Natural killer cell (primary cell): ENCODE measurements at regions of chr14 and their contacts with region 1.

Region 1: DNA sequence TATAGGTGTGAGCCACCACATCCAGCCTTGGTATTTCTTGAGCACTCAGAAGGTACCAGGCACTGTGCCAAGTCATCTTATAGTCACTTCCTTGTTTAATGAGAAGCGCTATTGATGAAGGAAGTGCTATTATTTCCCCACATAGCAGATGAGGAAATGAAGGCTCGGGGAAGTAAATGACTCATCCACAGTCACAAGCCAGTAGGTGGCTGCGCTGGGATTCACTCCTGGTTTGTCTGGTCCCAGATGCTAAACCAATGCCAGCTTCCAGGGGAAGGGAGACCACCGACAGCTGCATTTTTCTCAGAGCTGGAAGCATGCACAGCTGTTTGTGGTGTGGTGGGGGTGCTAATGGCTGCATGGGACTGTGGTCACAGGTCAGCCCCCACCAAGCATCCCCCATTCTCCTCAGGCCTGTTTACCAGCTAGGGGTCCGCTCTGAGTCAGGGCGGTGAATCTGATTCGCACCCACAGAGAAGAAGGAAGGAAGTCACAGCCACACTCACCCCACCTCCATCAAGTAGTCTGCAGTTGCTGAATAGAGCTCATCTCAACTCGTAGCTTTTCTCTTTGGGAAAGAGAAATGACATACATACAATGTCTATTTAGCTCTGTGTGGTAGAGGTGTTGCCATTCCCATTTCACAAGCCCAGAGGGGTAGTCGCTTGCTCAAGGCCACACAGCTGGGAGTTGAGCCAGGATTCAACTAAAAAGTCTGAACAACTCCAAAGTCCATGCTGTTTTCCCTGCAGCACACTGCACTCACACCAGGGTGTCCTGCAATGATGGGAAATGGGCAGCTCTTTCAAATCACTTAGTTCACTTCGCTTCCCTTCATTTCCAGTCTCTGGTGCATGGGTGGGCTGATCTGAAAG is 6.3 kb upstream of the LTBP2 start:
- DNase-seq: peak; percentile 86 to 92
- ATAC-seq: peak; percentile 74 to 91 (median 89)
- H3K4me3 ChIP-seq: no peak overlapping the region
- H3K4me3 Mint-ChIP-seq: peak overlapping the region; percentile 83
- H3K27ac ChIP-seq: peak overlapping the region; percentile 84
- H3K27ac Mint-ChIP-seq: peak overlapping the region; percentile 91 to 97
- H3K4me1 ChIP-seq: peaks cover 82% of the 10 kb centered on the region
- H3K4me1 Mint-ChIP-seq: peaks cover 82 to 92% of the 10 kb centered on the region in 2 donors
- H3K27me3 ChIP-seq: no peaks in the 10 kb centered on the region
- H3K27me3 Mint-ChIP-seq: peaks cover 0 to 2% of the 10 kb centered on the region in 2 donors
- CTCF ChIP-seq: no peak

Region 2: DNA sequence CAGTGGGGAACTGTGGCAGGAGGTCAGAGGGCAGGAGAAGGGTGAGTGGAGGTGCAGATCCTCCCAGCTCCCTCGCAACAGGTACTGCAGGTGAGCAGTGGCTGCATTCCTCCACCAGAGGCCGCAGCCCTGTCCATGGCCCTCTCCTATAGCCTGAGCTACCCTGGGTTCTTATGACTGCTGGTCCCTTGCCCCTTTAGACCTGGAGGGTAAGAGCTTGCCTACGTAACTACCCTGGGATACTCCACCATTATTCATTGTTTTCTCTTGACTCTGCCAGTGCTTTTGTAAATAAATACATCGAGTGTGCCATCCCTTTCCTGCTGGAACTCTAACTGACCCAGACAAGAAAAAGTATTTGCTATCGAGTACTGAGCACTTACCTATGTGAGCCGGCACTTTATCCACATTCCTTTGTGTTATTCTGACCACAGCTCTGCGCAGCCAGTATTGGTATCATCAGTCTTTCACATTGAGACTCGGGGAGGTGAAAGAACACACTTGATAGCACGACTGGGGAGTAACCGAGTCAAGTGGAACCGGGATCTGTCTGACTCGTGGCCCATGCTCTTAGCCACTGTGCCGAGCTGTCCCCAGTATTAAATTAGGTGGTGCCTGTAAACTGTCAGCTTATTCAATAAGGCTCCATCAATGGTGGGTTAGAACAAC is 44.8 kb before region 1 on chr14:
- intact Hi-C with region 1: loop called (anchors 1 kb)
- DNase-seq: no peak
- ATAC-seq: peak in 1 of 3 donors; percentile 61
- H3K4me3 ChIP-seq: no peak overlapping the region
- H3K4me3 Mint-ChIP-seq: peak overlapping the region; percentile 14
- H3K27ac ChIP-seq: no peak overlapping the region
- H3K27ac Mint-ChIP-seq: peak overlapping the region; percentile 9 to 56
- H3K4me1 ChIP-seq: peaks cover 41% of the 10 kb centered on the region
- H3K4me1 Mint-ChIP-seq: peaks cover 32 to 41% of the 10 kb centered on the region in 2 donors
- H3K27me3 ChIP-seq: peaks cover 47% of the 10 kb centered on the region
- H3K27me3 Mint-ChIP-seq: peaks cover 67 to 82% of the 10 kb centered on the region in 2 donors
- CTCF ChIP-seq: no peak

Region 3: DNA sequence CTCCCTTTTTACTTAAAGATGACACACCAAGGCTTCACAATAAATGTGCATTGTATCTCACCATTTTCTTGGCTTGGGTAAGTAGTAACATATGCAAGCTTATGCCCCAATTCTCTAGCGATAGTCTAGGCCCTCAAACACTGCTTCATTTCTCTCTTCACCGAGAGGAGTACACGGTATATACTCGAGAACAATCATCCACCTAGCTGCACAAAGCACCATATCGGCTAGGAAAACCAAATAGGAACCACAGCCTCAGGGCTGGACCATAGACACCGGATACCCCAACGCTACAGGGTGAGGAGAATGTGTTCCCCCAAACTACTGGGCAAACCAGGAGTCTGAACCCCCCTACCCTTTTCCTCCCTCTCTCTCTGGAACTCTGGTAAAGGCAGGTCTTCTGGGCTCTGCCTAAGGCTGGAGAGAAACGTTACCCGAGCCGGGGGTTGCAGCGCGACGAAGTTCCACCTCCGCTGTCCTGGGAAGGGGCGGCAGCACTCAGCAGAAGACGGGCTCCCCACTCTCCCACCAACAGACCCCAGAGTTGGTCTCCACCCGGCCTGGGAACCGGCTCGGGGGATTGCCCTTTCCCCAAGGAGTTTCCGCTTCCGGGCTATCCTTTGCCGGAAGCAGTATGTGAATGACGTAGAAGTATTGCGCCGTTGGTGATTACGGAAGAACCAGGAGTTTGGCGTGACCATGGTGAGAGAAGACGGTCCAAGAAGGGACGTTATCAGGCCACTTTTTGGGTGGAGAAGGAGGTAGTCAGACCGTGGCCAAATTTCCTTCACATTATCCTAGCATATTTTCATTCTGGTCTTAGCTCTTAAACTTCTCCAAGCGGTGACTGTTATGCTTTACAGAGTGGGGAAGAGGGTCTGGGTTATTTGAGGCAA is 94.4 kb after region 1 on chr14 and contains the starts of genes AREL1 and FCF1:
- intact Hi-C with region 1: loop called (anchors 2 kb)
- DNase-seq: peak; percentile 74 to 94
- ATAC-seq: peak; percentile 92 to 94 (median 93)
- H3K4me3 ChIP-seq: peak within 1 kb of the TSS; percentile 76
- H3K4me3 Mint-ChIP-seq: peak within 1 kb of the TSS; percentile 97
- H3K27ac ChIP-seq: peak within 1 kb of the TSS; percentile 87
- H3K27ac Mint-ChIP-seq: peak within 1 kb of the TSS; percentile 97 to 99
- H3K4me1 ChIP-seq: peaks cover 7% of the 10 kb centered on the region
- H3K4me1 Mint-ChIP-seq: peaks cover 50 to 54% of the 10 kb centered on the region in 2 donors
- H3K27me3 ChIP-seq: no peaks in the 10 kb centered on the region
- H3K27me3 Mint-ChIP-seq: no peaks in the 10 kb centered on the region
- CTCF ChIP-seq: no peak
- total RNA-seq, gene AREL1: 65.9 to 83.0 (median 82.3) TPM
- total RNA-seq, gene FCF1: 37.1 to 49.6 (median 40.4) TPM

Region 4: DNA sequence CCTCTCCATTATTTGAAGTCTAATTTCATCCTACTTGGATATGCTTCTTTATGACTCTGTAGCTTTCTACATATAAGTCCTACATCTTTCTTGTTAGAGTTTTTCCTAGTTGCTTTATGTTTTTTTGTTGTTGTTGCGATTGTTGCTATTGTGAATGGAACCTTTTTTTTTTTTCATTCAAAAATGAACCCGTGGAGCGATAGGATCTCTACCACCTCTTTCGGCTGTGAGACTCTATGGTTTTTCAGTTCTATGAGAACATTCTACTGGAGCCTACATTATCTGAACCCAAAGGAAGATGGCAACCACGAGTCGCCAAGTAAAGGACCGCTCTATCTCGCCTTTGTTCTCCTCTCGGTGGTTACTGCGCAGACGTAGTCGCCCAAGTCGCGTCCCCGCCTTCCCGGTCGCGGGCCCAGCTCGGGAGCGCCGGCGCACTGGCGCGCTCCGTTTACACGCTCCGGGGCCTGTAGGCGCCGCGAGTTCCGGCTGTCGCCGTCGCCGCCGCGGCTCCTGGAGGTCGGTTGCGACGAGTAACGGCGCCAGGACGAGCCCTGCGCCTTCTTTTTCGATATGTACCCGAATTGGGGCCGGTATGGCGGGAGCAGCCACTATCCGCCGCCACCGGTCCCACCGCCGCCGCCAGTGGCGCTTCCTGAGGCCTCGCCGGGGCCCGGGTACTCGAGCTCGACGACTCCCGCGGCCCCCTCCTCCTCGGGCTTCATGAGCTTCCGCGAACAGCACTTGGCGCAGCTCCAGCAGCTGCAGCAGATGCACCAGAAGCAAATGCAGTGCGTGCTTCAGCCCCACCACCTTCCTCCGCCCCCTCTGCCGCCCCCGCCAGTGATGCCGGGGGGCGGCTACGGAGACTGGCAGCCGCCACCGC is 144.8 kb after region 1 on chr14 and contains the start of gene YLPM1:
- intact Hi-C with region 1: loop called (anchors 2 kb)
- DNase-seq: peak; percentile 87 to 98
- ATAC-seq: peak; percentile 94 to 99 (median 95)
- H3K4me3 ChIP-seq: peak within 1 kb of the TSS; percentile 96
- H3K4me3 Mint-ChIP-seq: peak within 1 kb of the TSS; percentile 92
- H3K27ac ChIP-seq: peak within 1 kb of the TSS; percentile 93
- H3K27ac Mint-ChIP-seq: peak within 1 kb of the TSS; percentile 91 to 94
- H3K4me1 ChIP-seq: peaks cover 13% of the 10 kb centered on the region
- H3K4me1 Mint-ChIP-seq: peaks cover 45 to 46% of the 10 kb centered on the region in 2 donors
- H3K27me3 ChIP-seq: no peaks in the 10 kb centered on the region
- H3K27me3 Mint-ChIP-seq: peaks cover 0 to 2% of the 10 kb centered on the region in 2 donors
- CTCF ChIP-seq: peak; percentile 57
- total RNA-seq, gene YLPM1: 86.1 to 101 (median 93.3) TPM

Region 5: DNA sequence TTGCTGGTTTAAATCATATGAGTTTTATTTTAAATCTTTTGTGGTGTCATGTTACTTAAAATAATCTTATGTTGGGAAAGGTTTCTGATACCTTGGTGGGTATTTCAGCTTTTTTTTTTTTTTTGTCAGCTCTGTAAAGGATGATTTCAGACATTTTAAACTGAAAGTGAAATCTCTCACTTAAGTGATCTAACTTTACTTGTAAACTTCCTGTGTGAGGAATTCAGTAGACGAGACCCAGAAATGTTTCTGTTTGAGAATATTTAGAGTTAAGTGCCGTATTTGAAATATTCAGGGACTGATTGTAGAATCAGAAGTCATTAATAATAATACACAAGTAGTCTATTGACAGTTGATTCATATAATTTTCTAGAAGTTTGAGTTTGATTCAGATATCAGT is 219.9 kb after region 1 on chr14:
- intact Hi-C with region 1: loop called (anchors 1 kb)
- DNase-seq: peak in 1 of 2 donors; percentile 65
- ATAC-seq: peak; percentile 83 to 84 (median 83)
- H3K4me3 ChIP-seq: no peak overlapping the region
- H3K4me3 Mint-ChIP-seq: peak overlapping the region; percentile 84
- H3K27ac ChIP-seq: peak overlapping the region; percentile 95
- H3K27ac Mint-ChIP-seq: peak overlapping the region; percentile 97 to 98
- H3K4me1 ChIP-seq: peaks cover 16% of the 10 kb centered on the region
- H3K4me1 Mint-ChIP-seq: peaks cover 44 to 50% of the 10 kb centered on the region in 2 donors
- H3K27me3 ChIP-seq: no peaks in the 10 kb centered on the region
- H3K27me3 Mint-ChIP-seq: no peaks in the 10 kb centered on the region
- CTCF ChIP-seq: no peak

Region 6: DNA sequence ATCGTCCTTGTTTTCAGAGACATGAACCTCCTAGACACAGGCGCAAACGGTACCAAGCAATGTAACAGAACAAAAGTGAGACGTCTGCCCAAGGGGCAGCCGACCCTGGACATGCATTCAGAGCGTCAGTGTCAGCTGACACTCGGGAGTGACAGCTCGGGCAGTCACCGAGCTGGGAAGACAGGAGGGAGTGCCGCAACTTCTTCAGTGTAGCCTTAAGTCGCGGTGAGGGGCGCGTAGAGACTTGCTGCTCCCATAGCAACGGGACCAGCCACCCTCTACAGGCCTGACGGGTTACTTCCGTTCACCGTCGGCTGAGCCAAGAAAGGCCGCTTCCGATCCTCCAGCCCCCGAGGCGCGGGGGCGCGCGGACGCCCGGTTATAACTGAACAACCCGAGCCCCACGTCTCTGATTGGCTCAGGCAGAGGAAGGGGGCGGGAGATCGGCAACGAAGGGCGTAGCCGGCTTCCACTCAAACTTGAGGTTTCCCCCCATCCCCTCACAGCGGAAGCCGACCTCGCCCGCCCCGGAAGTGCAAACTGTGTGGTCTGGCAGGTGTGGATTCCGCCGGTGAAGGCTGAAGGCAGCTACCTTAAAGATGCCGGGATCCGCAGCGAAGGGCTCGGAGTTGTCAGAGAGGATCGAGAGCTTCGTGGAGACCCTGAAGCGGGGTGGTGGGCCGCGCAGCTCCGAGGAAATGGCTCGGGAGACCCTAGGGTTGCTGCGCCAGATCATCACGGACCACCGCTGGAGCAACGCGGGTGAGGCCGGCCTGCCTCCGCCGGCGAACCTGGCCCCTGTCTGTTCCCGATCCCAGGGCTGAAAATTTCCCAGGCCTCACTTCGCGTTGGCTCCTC is 384.3 kb after region 1 on chr14 and contains the start of gene EIF2B2:
- intact Hi-C with region 1: loop called (anchors 1 kb)
- DNase-seq: peak; percentile 97 to 99
- ATAC-seq: peak; percentile 93 to 99 (median 93)
- H3K4me3 ChIP-seq: peak within 1 kb of the TSS; percentile 71
- H3K4me3 Mint-ChIP-seq: peak within 1 kb of the TSS; percentile 98
- H3K27ac ChIP-seq: peak within 1 kb of the TSS; percentile 99
- H3K27ac Mint-ChIP-seq: peak within 1 kb of the TSS; percentile 94 to 95
- H3K4me1 ChIP-seq: peaks cover 21% of the 10 kb centered on the region
- H3K4me1 Mint-ChIP-seq: peaks cover 55 to 58% of the 10 kb centered on the region in 2 donors
- H3K27me3 ChIP-seq: no peaks in the 10 kb centered on the region
- H3K27me3 Mint-ChIP-seq: no peaks in the 10 kb centered on the region
- CTCF ChIP-seq: no peak
- total RNA-seq, gene EIF2B2: 22.2 to 45.1 (median 31.2) TPM